Activated CD4-positive, alpha-beta memory T cell treated with anti-CD3 and anti-CD28 coated beads, Interleukin-2, amount 10 ng/mL, durations not matched to agents 7 days and 5 days (primary cell): ENCODE measurements at regions of chr9 and their contacts with region 1.

Region 1: GRCh38 chr9:130010151-130010988 is 32.6 kb downstream of the FNBP1 start:
- DNase-seq: no peak
- H3K4me3 Mint-ChIP-seq: no peak overlapping the region
- H3K27ac Mint-ChIP-seq: peak overlapping the region; percentile 66
- H3K4me1 Mint-ChIP-seq: peaks cover 78% of the 10 kb centered on the region
- H3K27me3 Mint-ChIP-seq: no peaks in the 10 kb centered on the region

Region 2: GRCh38 chr9:129988607-129989361 is 21.6 kb before region 1 on chr9:
- CTCF ChIA-PET with region 1: interaction called, 4 read pairs
- POLR2A ChIA-PET with region 1: interaction called, 14 read pairs
- DNase-seq: no peak
- H3K4me3 Mint-ChIP-seq: no peak overlapping the region
- H3K27ac Mint-ChIP-seq: peak overlapping the region; percentile 72
- H3K4me1 Mint-ChIP-seq: peaks cover 75% of the 10 kb centered on the region
- H3K27me3 Mint-ChIP-seq: no peaks in the 10 kb centered on the region

Region 3: GRCh38 chr9:130023144-130023787 is 12.9 kb after region 1 on chr9:
- CTCF ChIA-PET with region 1: interaction called, 4 read pairs
- POLR2A ChIA-PET with region 1: interaction called, 30 read pairs
- DNase-seq: no peak
- H3K4me3 Mint-ChIP-seq: no peak overlapping the region
- H3K27ac Mint-ChIP-seq: peak overlapping the region; percentile 53
- H3K4me1 Mint-ChIP-seq: peaks cover 86% of the 10 kb centered on the region
- H3K27me3 Mint-ChIP-seq: no peaks in the 10 kb centered on the region